ENCODE measurements at regions of chr3 and their contacts with region 1.

Region 1: DNA sequence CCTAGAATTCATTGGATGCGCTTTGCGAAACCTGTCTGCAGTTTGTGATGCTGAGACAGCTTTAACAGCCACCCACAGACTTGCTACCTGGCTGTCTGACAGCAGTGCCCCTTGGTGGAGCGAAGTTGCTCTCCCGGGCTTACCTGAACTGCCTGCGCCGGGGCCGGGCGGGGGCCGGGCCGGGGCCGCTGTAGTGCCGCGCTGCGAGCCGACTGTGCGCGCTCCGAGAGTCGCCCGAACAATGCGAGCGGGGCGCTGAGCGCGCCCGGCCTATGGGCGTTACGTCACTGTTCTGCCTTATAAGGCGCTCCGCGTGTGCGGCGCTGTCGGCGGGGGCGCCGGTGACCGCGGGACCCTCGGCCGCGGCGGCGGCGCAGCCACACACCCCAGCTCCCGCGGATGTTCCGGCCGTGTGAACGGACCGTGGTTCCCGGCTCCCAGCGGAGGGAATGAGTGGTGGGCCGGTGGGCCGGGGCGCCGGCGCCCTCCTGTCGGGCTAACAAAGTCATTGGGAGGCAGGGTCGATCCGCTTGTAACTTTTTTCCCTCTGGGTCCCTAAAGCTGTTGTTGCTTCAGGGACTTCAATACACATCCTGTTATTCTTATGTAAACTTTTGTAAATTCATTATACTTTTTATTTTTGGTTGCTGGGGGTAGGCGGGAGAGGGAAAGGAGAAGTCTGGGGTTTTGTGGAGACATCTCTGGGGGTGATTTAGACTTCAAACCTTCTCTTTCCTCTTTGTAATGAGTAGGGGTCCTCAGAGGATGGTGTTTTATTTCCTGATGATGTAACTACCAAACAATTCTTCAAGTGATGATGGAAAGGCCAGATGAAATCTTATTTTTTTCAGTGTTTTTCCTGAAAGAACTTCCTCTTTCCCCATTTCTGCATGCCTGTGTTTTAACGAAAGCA is 58.5 kb downstream of the CMSS1 start:
- DNase-seq: peak; percentile 94

Region 2: GRCh38 chr3:99920481-99921376 is 44.5 kb after region 1 on chr3:
- intact Hi-C with region 1: loop called (anchors 5 kb)
- DNase-seq: peak; percentile 83

Region 3: DNA sequence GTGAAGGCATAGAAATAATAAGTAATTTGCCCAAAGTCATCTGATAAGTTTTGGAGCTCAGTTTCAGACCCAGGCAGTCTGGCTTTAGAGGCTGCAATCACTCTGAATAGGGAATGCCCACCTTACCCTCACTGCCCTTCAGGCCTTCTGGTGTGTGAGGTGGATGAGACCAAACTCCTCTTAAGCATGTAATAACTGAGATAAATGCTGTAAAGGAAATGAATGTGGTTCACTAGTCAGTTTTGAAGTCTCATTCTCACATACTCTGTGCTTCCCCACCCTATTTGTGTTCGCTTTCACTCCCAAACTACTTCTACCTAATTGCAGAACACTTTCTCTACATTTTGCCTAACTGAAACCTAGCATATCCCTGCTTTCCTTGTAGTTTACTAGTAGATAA is 94.0 kb after region 1 on chr3:
- intact Hi-C with region 1: no loop called
- DNase-seq: no peak